ENCODE measurements at regions of chr6 and their contacts with region 1.

Region 1: DNA sequence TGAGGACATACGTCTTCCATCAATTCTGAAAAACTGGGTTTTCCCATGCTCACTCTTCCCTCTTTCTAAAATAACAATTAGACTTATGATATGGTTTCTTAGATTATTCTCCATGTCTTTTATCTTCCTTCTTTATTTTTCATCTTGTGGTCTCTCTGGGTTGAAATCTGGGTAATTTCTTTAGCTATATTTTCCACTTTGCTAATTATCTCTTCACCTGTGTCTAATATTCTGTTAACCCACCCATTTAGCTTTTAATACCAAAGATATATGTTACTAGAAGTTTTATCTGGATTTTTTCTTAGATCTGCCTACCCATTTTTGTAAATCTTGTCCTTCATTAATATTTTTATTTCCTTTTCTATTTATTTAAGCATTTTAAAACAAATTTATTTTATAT is 121.8 kb downstream of the TENT5A start:
- DNase-seq: no peak
- H3K4me3 ChIP-seq: no peak overlapping the region
- H3K27ac ChIP-seq: no peak overlapping the region
- H3K4me1 ChIP-seq: no peaks in the 10 kb centered on the region
- H3K27me3 ChIP-seq: no peaks in the 10 kb centered on the region
- CTCF ChIP-seq: no peak
- EP300 ChIP-seq: no peak
- POLR2A ChIP-seq: no peak

Region 2: GRCh38 chr6:80022803-80023202 is 1607.9 kb before region 1 on chr6:
- in situ Hi-C with region 1: no loop called
- intact Hi-C with region 1: no loop called
- DNase-seq: no peak
- H3K4me3 ChIP-seq: no peak overlapping the region
- H3K27ac ChIP-seq: no peak overlapping the region
- H3K4me1 ChIP-seq: no peaks in the 10 kb centered on the region
- H3K27me3 ChIP-seq: no peaks in the 10 kb centered on the region
- CTCF ChIP-seq: no peak
- EP300 ChIP-seq: no peak
- POLR2A ChIP-seq: no peak

Region 3: DNA sequence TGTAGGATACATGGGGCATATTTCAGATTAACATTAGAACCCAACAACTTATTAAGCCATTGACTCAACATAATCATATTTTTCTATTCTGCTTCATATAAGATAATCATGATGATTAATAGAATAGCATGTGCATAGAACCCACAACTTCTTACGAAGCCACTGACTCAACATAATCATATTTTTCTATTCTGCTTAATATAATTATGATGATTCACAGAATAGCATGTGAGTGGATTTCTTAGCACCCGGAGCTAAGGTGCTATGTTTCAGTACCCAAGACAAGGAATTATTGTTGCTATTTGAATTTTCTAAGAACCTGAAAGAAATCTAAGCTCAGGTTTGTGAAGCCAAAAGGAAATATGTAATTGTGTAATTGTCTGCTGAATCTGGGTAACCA is 25.0 kb after region 1 on chr6:
- in situ Hi-C with region 1: no loop called
- intact Hi-C with region 1: loop called (anchors 1 kb)
- DNase-seq: no peak
- H3K4me3 ChIP-seq: no peak overlapping the region
- H3K27ac ChIP-seq: no peak overlapping the region
- H3K4me1 ChIP-seq: no peaks in the 10 kb centered on the region
- H3K27me3 ChIP-seq: no peaks in the 10 kb centered on the region
- CTCF ChIP-seq: no peak
- EP300 ChIP-seq: no peak
- POLR2A ChIP-seq: no peak